ENCODE measurements at regions of chr2 and their contacts with region 1.

Region 1: DNA sequence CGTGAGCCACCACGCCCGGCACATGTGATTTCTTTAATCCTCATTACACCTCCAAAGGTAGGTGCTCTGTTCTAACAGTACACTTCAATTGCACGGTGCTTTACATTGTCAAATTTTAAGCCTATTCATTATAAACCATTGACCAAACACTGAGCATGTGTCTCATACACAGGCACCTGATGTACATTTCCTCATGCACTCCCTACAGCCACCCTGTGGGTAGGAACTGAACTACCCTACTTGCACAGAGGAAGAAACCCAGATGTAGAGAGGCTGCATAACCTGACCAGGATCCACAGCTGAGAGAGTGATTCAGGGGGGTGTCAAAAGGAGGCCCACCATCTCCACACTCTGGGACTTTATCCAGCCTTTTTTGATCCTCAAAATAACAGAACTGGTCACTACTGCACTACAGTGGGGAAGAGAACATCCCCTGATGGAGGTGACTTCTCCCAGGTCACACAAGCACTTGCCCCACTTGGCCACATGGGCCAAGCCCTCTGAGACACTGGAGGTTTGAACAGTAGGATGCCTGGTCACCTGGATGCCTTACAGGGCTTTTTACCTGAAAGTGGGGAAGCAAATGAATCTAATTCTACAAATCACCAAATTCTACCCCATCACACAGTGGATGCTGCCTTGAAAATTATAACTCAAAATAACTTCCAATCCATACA is 6.9 kb upstream of the DPYSL5 start:
- DNase-seq: peak in 1 of 2 donors; percentile 20
- H3K4me3 ChIP-seq: no peak overlapping the region
- CTCF ChIP-seq: no peak
- POLR2A ChIP-seq: no peak

Region 2: DNA sequence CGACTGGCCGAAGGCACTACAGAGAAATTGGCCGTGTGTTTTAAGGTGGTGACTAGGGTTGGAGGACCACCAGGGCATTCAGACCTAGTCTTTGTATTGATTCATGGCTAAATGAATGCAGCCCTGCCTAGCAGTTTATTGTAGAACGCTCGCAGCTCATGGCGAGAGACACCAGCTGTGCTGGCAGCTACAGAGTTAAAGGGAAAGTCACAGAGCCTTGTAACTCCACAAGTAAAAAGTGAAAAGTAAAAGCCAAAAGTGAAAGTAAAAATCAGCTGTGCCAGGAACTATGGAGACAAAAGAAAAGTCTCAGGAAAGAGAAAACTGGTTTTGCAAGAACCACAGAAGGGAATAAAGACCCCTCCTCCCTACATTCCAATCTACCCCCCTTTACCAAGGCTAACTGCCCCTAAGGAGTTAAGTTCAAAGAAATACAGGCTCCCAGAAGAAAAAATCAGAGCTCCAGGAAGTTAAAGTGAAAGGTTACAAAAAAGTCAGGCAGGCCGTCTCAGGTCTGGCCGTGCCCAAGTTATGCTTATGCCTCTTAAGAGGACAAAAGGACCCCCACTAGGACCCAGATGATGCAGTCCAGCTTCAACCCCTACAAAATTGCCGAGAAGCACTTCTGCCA is 541.5 kb before region 1 on chr2:
- intact Hi-C with region 1: no loop called
- DNase-seq: no peak
- H3K4me3 ChIP-seq: peak overlapping the region; percentile 16
- CTCF ChIP-seq: no peak
- POLR2A ChIP-seq: no peak

Region 3: DNA sequence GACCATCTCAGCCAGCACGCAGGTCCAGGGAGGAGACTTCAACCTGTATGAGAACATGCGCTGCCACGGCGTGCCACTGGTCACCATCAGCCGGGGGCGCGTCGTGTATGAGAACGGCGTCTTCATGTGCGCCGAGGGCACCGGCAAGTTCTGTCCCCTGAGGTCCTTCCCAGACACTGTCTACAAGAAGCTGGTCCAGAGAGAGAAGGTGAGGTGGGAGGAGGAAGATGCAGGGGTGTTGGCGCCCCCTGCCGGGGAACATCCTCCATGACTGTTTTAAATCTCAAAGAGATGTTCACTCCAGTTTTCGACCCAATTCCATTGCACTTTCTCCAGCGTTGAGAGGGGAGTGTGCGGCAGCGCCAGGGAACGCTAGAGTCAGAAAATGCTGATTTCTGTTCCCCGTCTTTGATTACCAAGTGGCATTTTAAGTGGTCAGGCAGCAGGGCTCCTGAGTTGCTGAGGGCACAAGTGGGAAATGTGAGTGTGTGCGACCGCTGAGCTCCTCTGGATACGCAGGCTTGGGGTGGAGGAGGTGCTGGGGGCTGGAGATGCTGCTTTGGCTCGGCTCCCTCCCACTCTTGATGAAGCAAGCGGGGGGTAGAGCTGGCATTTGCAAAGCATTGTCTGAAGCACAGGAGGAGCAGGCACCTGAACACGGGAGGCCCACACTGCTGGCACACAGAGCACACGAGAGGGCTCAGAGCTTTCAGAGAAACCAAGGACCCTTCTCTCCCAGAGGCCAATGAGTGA is 101.6 kb after region 1 on chr2:
- intact Hi-C with region 1: loop called (anchors 5 kb)
- DNase-seq: peak; percentile 37 to 93
- H3K4me3 ChIP-seq: no peak overlapping the region
- CTCF ChIP-seq: peak in 1 of 3 donors; percentile 52
- POLR2A ChIP-seq: no peak

Region 4: GRCh38 chr2:27663463-27664249 is 822.6 kb after region 1 on chr2 and contains the starts of genes SLC4A1AP and SUPT7L:
- intact Hi-C with region 1: no loop called
- DNase-seq: peak; percentile 56 to 90
- H3K4me3 ChIP-seq: peak within 1 kb of the TSS; percentile 77
- CTCF ChIP-seq: peak in 1 of 3 donors; percentile 74
- POLR2A ChIP-seq: no peak
- total RNA-seq, gene SLC4A1AP: 15.6 to 25.0 (median 22.1) TPM
- total RNA-seq, gene SUPT7L: 9.7 to 16.9 (median 14.9) TPM

Measured in lower leg skin (tissue), 4 donors.